Gastrocnemius medialis (tissue), 4 donors: ENCODE measurements at regions of chr7 and their contacts with region 1.

Region 1: GRCh38 chr7:51249184-51249945 is 67.2 kb downstream of the COBL start:
- DNase-seq: no peak
- ATAC-seq: peak; percentile 59 to 71
- H3K4me3 ChIP-seq: no peak overlapping the region
- H3K27ac ChIP-seq: peak overlapping the region in 2 of 4 donors; percentile 66 to 86
- H3K4me1 ChIP-seq: peaks cover 53 to 54% of the 10 kb centered on the region in 2 donors
- H3K27me3 ChIP-seq: no peaks in the 10 kb centered on the region
- CTCF ChIP-seq: no peak
- POLR2A ChIP-seq: no peak

Region 2: DNA sequence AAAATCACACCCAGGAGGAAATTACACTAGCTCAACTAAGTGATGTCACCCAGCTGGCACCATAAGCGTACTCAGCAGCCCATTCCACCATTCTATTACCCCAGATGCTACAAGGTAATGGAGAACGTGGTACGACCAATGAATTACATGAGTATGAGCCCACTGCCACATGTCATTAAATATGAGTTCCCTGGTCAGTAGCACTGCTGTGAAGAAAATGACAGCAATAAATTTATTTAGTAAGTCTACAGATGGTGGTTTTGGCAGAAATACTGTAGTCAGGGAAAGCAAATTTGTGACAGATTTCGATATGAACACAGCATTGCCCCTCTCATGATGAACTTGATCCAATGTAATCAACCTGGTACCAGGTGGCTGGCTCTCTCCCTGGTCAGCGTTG is 1321.7 kb before region 1 on chr7:
- in situ Hi-C with region 1: no loop called
- intact Hi-C with region 1: no loop called
- DNase-seq: no peak
- ATAC-seq: no peak
- H3K4me3 ChIP-seq: no peak overlapping the region
- H3K27ac ChIP-seq: no peak overlapping the region
- H3K4me1 ChIP-seq: no peaks in the 10 kb centered on the region
- H3K27me3 ChIP-seq: no peaks in the 10 kb centered on the region
- CTCF ChIP-seq: no peak
- POLR2A ChIP-seq: no peak

Region 3: GRCh38 chr7:51234139-51234538 is 15.2 kb before region 1 on chr7:
- in situ Hi-C with region 1: no loop called
- intact Hi-C with region 1: loop called (anchors 2 kb)
- DNase-seq: peak; percentile 97 to 98
- ATAC-seq: peak; percentile 94 to 97
- H3K4me3 ChIP-seq: no peak overlapping the region
- H3K27ac ChIP-seq: peak overlapping the region; percentile 83 to 91 (median 88)
- H3K4me1 ChIP-seq: peaks cover 30 to 33% of the 10 kb centered on the region in 2 donors
- H3K27me3 ChIP-seq: no peaks in the 10 kb centered on the region
- CTCF ChIP-seq: no peak
- POLR2A ChIP-seq: peak in 1 of 2 donors; percentile 43

Region 4: GRCh38 chr7:51455948-51456347 is 206.6 kb after region 1 on chr7:
- in situ Hi-C with region 1: no loop called
- intact Hi-C with region 1: no loop called
- DNase-seq: no peak
- ATAC-seq: no peak
- H3K4me3 ChIP-seq: no peak overlapping the region
- H3K27ac ChIP-seq: no peak overlapping the region
- H3K4me1 ChIP-seq: no peaks in the 10 kb centered on the region
- H3K27me3 ChIP-seq: no peaks in the 10 kb centered on the region
- CTCF ChIP-seq: no peak
- POLR2A ChIP-seq: no peak